ENCODE measurements at regions of chr2 and their contacts with region 1.

Region 1: DNA sequence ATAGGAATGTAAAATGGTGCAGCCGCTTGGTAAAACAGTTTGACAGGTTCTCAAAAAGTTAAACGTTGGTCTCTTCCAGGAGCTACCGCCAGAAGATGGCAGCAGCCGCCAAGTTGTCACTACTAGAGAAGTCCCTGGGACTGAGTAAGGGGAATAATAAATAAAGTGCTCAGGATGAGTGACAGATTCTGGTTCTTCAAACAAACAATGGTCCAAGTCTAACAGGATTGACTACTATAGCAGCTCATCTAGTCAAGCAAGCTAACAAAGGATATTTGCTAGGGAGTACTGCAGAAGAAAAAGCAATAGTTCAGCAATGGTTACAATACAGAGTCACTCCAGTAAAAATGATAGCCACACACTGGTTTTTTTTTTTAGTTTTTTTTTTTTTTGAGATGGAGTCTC is 3.8 kb upstream of the ANAPC1 start:
- DNase-seq: peak; percentile 82
- ATAC-seq: peak; percentile 38 to 42

Region 2: DNA sequence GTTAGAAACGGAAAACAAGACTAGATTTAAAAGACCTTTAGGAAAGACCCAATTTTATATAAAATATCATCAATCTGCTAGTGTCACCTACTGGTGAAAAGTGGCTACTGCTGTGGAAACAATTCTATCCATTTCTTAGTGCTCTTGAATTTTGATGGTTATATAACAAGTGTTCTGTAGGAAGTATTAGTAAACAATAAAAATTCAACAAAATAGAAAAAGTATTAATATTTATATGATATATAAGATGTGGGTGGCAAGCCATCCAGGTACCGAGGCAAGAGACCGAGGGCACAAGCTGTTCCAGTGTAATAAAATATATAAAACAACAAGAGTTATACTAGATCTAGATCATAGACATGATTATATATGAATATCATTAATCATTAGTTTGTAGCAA is 161.1 kb after region 1 on chr2:
- intact Hi-C with region 1: loop called in 1 of 2 experiments (anchors 2 kb)
- DNase-seq: no peak
- ATAC-seq: peak; percentile 70 to 80

Region 3: GRCh38 chr2:112314856-112315255 is 427.0 kb after region 1 on chr2:
- intact Hi-C with region 1: no loop called
- DNase-seq: no peak
- ATAC-seq: no peak